A673 (cell line): ENCODE measurements at regions of chr16 and their contacts with region 1.

Region 1: GRCh38 chr16:25395528-25395927 is 137.9 kb upstream of the ZKSCAN2 start:
- DNase-seq: peak; percentile 7
- H3K4me3 ChIP-seq: no peak overlapping the region
- H3K27ac ChIP-seq: no peak overlapping the region
- H3K4me1 ChIP-seq: no peaks in the 10 kb centered on the region
- H3K27me3 ChIP-seq: no peaks in the 10 kb centered on the region
- CTCF ChIP-seq: peak; percentile 31

Region 2: GRCh38 chr16:25250467-25250866 is 145.1 kb before region 1 on chr16:
- CTCF ChIA-PET with region 1: interaction called, 11 read pairs
- POLR2A ChIA-PET with region 1: no interaction called
- intact Hi-C with region 1: no loop called
- DNase-seq: no peak
- H3K4me3 ChIP-seq: no peak overlapping the region
- H3K27ac ChIP-seq: no peak overlapping the region
- H3K4me1 ChIP-seq: no peaks in the 10 kb centered on the region
- H3K27me3 ChIP-seq: no peaks in the 10 kb centered on the region
- CTCF ChIP-seq: no peak

Region 3: DNA sequence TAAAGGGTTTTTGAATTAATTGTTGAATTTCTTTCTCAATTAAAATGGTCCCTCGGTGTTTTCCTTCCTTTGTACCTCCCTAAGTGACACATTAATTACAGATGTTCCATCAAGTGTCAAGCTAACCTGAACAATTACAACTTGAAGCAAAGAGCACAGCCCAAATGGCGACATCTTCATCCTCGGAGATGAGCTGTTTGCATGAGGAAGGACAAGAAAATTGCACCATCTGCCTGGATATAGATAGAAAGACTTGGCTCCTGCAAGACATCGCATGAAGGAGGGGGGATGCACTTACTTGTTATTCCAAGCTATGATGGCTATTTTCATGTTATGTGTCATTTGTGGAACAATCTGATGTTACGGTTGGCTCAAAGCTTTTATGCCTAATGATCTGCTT is 51.5 kb before region 1 on chr16:
- CTCF ChIA-PET with region 1: no interaction called
- POLR2A ChIA-PET with region 1: no interaction called
- intact Hi-C with region 1: no loop called
- DNase-seq: no peak
- H3K4me3 ChIP-seq: no peak overlapping the region
- H3K27ac ChIP-seq: no peak overlapping the region
- H3K4me1 ChIP-seq: peaks cover 4% of the 10 kb centered on the region
- H3K27me3 ChIP-seq: no peaks in the 10 kb centered on the region
- CTCF ChIP-seq: no peak

Region 4: GRCh38 chr16:25366078-25366477 is 29.4 kb before region 1 on chr16:
- CTCF ChIA-PET with region 1: no interaction called
- POLR2A ChIA-PET with region 1: no interaction called
- intact Hi-C with region 1: no loop called
- DNase-seq: peak; percentile 15
- H3K4me3 ChIP-seq: no peak overlapping the region
- H3K27ac ChIP-seq: no peak overlapping the region
- H3K4me1 ChIP-seq: no peaks in the 10 kb centered on the region
- H3K27me3 ChIP-seq: no peaks in the 10 kb centered on the region
- CTCF ChIP-seq: peak; percentile 24; the same call in 1 of the 2 replicates

Region 5: GRCh38 chr16:25553711-25554436 is 158.3 kb after region 1 on chr16:
- CTCF ChIA-PET with region 1: no interaction called
- POLR2A ChIA-PET with region 1: no interaction called
- intact Hi-C with region 1: no loop called
- DNase-seq: peak; percentile 12
- H3K4me3 ChIP-seq: no peak overlapping the region
- H3K27ac ChIP-seq: peak overlapping the region; percentile 27
- H3K4me1 ChIP-seq: no peaks in the 10 kb centered on the region
- H3K27me3 ChIP-seq: no peaks in the 10 kb centered on the region
- CTCF ChIP-seq: no peak